Cardiac septum (tissue), 1 donor: ENCODE measurements at regions of chr5 and their contacts with region 1.

Region 1: DNA sequence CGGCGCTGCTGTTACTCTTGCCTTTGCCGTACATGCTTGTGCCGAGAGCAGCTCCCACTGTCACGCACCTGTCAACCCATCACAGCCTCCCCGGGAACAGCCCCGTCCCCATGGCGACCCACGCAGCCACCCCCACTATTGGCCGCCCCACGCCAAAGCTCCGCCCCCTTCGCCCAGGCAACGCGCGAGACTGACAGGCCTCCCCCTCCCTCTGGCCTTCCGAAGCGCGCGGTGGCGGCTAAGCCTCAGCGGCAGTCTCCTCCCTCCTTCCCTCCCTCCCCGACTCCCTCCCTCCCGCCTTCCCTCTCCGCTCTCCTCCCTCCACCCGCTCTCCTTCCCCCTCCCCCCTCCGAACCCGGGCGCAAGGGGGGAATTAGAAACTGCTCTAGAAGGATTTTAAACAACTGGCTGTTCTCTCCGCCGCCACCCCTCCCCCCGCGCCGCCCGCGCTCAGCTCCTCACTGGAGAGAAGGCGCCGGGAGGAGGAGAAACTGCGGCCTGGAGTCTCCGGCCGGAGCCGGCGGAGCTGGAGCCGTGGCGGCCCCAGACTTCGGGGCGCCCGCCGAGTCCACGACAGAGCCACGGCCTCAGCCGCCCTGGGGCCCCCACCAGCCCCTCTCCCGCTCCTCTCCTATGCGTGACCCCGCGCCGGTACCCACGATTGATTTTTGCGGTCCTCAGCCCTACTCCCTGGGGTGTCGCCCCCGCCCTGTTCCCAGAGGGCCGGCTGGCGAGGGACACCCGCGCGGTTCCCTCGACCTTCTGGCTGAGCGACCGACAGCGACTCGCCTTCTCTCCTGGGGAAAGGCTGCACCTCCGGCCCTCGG is at the start of gene SSBP2:
- DNase-seq: peak; percentile 100
- total RNA-seq, gene SSBP2: 102 TPM

Region 2: DNA sequence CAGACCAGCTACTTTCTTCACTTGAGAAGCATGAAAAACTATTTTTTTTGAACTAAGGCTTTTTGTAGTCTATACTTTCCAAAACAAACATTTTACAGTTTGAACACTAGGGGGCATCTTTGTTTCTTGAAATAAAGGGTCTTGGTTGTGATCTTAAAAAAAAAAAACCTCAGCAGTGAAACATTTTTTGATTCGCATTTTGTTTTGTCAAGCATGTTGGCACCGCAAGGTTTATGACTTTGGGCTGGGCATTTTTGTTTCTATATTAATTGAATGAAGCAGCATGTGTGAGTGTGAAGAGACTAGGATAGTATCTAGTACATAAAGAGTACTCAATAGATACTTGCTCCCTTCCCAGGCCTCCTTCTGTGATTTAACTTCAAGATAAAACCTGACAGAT is 325.7 kb before region 1 on chr5:
- intact Hi-C with region 1: loop called (anchors 2 kb)
- DNase-seq: no peak

Region 3: GRCh38 chr5:81626524-81626923 is 124.7 kb before region 1 on chr5:
- intact Hi-C with region 1: loop called (anchors 10 kb)
- DNase-seq: no peak

Region 4: DNA sequence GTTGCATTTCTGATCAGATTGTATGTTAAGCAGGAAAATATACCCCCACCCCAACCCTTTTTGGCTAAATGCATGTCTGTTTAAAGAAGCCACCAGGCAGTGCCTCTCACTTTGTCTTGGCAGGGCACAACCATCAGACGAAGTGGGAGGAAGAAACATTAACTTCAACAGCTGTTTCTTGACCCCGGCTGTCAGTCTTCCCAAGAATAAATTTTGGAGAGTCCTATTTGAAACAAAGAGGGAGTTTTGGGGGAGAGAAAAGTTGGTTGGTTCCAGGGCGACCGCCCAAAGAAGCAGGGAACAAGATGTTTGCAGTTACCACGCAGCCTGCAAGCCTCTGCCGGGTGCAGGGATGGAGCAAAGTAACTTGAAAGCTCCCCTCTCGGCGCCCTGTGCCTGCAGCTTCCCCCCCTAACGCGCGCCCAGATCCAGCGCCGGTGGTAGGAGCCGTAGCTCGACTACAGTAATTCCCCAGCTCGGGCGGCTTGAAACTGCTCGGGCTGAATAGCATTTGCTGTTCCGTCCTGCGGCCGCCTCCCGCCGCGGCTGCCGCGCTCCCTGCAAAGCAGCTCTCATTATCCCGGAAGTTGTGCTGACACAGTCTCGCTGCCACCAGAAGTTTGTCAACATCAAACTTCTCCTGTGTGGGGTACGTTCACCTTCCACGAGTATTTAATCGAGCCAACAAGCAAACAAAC is 100.4 kb after region 1 on chr5:
- intact Hi-C with region 1: loop called (anchors 1 kb)
- DNase-seq: peak; percentile 98

Region 5: DNA sequence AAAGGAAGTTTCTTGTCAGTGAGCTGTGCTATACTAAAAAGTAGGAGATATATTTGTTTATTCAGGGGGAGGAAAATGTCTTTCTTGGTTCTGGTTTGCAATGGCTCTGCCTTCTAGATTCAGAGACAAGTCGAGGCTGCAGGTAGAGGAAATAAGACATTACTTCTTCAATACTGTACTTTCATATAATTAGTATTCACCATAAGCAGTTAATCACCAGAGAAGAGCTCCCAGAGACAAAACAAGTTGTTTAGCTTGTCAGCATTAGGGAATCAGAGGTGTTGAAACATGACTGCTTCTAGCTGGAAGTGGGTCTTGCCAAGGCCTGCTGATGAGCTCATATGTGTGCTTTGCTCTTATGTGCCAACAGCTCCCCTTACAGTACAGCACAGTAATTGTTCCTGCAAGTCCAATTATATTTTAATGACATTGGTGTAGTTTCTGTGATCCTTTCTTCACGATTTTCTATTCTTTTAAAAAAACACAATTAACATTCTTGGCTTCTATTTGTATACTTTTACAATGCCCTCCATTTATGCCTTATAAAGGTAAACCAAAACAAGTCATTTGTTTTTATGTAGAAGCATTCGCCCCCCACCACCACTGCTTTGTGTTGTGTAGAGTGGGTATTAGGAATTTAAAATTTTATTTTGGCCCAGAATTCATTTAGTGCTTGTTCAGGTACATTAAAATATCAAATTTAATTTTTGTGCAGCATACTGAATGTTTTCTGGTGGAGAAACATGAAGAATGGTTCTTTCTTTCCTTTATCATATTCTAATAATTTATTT is 414.7 kb after region 1 on chr5:
- intact Hi-C with region 1: loop called (anchors 10 kb)
- DNase-seq: no peak